Panc1 (cell line): ENCODE measurements at regions of chr6 and their contacts with region 1.

Region 1: DNA sequence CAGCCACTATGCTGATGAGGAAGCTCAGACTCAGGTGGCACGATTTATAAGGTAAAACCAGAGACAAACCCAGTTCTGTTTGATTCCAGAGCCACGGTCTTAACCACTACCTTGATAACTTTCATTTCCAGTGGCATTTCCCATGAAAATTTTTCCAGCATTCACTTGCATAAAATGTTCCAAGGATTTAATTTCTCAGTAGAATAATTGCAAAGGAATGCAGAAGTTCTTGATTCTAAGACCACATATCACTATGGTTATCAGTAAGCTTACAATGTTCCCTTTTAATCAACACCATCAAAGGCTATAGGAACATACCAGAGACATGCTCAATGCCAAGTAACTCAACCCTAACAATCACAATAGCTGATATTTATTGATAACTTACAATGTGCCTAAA is 306.0 kb upstream of the HS3ST5 start:
- DNase-seq: no peak
- ATAC-seq: no peak
- H3K4me3 ChIP-seq: no peak overlapping the region
- H3K27ac ChIP-seq: no peak overlapping the region
- H3K4me1 ChIP-seq: no peaks in the 10 kb centered on the region
- H3K27me3 ChIP-seq: no peaks in the 10 kb centered on the region
- CTCF ChIP-seq: no peak

Region 2: GRCh38 chr6:114580882-114581281 is 68.0 kb before region 1 on chr6:
- CTCF ChIA-PET with region 1: no interaction called
- POLR2A ChIA-PET with region 1: no interaction called
- in situ Hi-C with region 1: no loop called
- intact Hi-C with region 1: no loop called
- DNase-seq: no peak
- ATAC-seq: no peak
- H3K4me3 ChIP-seq: no peak overlapping the region
- H3K27ac ChIP-seq: no peak overlapping the region
- H3K4me1 ChIP-seq: no peaks in the 10 kb centered on the region
- H3K27me3 ChIP-seq: no peaks in the 10 kb centered on the region
- CTCF ChIP-seq: no peak

Region 3: DNA sequence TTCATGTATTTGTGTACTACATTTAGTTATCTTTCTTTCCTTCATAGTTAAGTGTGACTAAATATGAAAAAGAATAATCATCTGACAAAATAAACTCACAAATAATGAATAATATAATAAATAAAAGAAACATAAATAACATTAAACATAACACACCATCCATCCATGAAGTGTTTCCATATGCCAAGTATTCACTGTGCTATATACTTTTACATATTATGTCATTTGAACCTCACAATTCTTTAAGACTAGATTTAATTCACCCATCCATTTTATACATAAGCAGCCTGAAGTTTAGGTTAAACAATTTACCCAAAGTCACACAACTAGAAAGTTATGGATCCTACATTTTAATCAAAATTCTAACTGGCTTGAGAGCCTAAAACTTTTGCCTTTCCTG is 243.4 kb after region 1 on chr6:
- CTCF ChIA-PET with region 1: no interaction called
- POLR2A ChIA-PET with region 1: interaction called, 11 read pairs
- in situ Hi-C with region 1: no loop called
- intact Hi-C with region 1: no loop called
- DNase-seq: no peak
- ATAC-seq: no peak
- H3K4me3 ChIP-seq: no peak overlapping the region
- H3K27ac ChIP-seq: no peak overlapping the region
- H3K4me1 ChIP-seq: no peaks in the 10 kb centered on the region
- H3K27me3 ChIP-seq: no peaks in the 10 kb centered on the region
- CTCF ChIP-seq: no peak